Ascending aorta (tissue), 2 donors: ENCODE measurements at regions of chr2 and their contacts with region 1.

Region 1: DNA sequence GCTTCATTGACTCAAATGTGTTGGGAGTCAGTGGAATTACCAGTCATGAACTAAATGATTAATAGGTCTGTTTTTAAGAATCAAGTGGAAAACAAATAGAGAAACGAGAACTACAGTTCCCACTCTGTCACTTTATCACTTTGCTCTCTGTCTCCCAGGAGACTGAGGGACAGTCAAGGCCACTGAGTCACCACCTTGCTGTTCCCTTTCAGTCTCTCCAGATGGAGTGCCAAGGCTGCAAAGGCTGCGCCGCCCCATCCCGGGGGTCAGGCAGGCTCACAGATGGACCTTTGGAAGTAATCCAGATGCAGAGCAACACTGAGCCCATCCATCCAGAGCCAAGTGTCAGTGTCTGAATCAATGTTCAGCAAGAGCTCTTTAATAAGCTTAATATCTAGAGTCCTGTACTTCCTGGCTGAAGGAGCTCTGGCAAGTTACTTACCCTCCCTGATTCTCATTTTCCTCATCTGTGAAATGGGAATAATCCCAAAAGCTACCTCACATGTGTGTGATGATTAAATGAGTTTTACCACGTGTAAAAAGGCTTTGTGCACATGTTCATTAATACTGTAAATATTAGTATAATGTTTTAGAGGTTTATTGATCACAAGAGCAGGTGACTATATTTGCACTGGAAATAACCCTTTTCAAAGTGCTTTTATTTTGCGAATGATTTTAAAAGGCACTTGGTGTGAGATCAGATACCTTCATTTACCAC is 43.0 kb upstream of the EFEMP1 start:
- DNase-seq: peak in 1 of 2 donors; percentile 84
- H3K4me3 ChIP-seq: peak overlapping the region in 1 of 2 donors; percentile 29
- H3K27ac ChIP-seq: peak overlapping the region; percentile 72 to 74
- H3K4me1 ChIP-seq: peaks cover 7 to 11% of the 10 kb centered on the region in 2 donors
- H3K27me3 ChIP-seq: no peaks in the 10 kb centered on the region
- CTCF ChIP-seq: peak in 1 of 3 experiments; percentile 17

Region 2: GRCh38 chr2:55992465-55992864 is 25.9 kb after region 1 on chr2:
- intact Hi-C with region 1: loop called (anchors 2 kb)
- DNase-seq: peak; percentile 14 to 88
- H3K4me3 ChIP-seq: no peak overlapping the region
- H3K27ac ChIP-seq: peak overlapping the region; percentile 62 to 65
- H3K4me1 ChIP-seq: peaks cover 0 to 15% of the 10 kb centered on the region in 2 donors
- H3K27me3 ChIP-seq: no peaks in the 10 kb centered on the region
- CTCF ChIP-seq: no peak

Region 3: GRCh38 chr2:55999790-56000189 is 33.2 kb after region 1 on chr2:
- intact Hi-C with region 1: loop called (anchors 2 kb)
- DNase-seq: no peak
- H3K4me3 ChIP-seq: no peak overlapping the region
- H3K27ac ChIP-seq: peak overlapping the region; percentile 51 to 57
- H3K4me1 ChIP-seq: peaks cover 3 to 7% of the 10 kb centered on the region in 2 donors
- H3K27me3 ChIP-seq: no peaks in the 10 kb centered on the region
- CTCF ChIP-seq: no peak